ENCODE measurements at regions of chr1 and their contacts with region 1.

Region 1: GRCh38 chr1:192580351-192580962 is 4.9 kb downstream of the RGS1 start:
- DNase-seq: peak in 4 of 14 experiments; percentile 36 to 72 (median 60)
- ATAC-seq: peak; percentile 30
- H3K4me3 ChIP-seq: no peak overlapping the region
- H3K4me3 Mint-ChIP-seq: no peak overlapping the region
- H3K27ac ChIP-seq: no peak overlapping the region
- H3K27ac Mint-ChIP-seq: peak overlapping the region; percentile 48
- H3K4me1 ChIP-seq: peaks cover 4% of the 10 kb centered on the region
- H3K4me1 Mint-ChIP-seq: peaks cover 46% of the 10 kb centered on the region
- H3K27me3 ChIP-seq: no peaks in the 10 kb centered on the region
- H3K27me3 Mint-ChIP-seq: no peaks in the 10 kb centered on the region
- CTCF ChIP-seq: peak; percentile 65

Region 2: GRCh38 chr1:192550922-192551534 is 29.4 kb before region 1 on chr1:
- CTCF ChIA-PET with region 1: interaction called, 3 read pairs
- POLR2A ChIA-PET with region 1: interaction called, 4 read pairs
- intact Hi-C with region 1: loop called in 1 of 2 experiments (anchors 2 kb)
- DNase-seq: peak in 4 of 14 experiments; percentile 28 to 55 (median 42)
- ATAC-seq: peak; percentile 74
- H3K4me3 ChIP-seq: no peak overlapping the region
- H3K4me3 Mint-ChIP-seq: peak overlapping the region; percentile 67
- H3K27ac ChIP-seq: no peak overlapping the region
- H3K27ac Mint-ChIP-seq: peak overlapping the region; percentile 76
- H3K4me1 ChIP-seq: peaks cover 15% of the 10 kb centered on the region
- H3K4me1 Mint-ChIP-seq: peaks cover 52% of the 10 kb centered on the region
- H3K27me3 ChIP-seq: no peaks in the 10 kb centered on the region
- H3K27me3 Mint-ChIP-seq: no peaks in the 10 kb centered on the region
- CTCF ChIP-seq: no peak

Measured in CD4-positive, alpha-beta T cell (primary cell).